ENCODE measurements at regions of chr14 and their contacts with region 1.

Region 1: GRCh38 chr14:64986578-64987571 is at the start of gene FNTB:
- DNase-seq: peak; percentile 92
- ATAC-seq: peak; percentile 99
- H3K4me3 ChIP-seq: peak within 1 kb of the TSS; percentile 63 to 86 (median 83)
- H3K27ac ChIP-seq: peak within 1 kb of the TSS; percentile 88
- H3K4me1 ChIP-seq: peaks cover 55% of the 10 kb centered on the region
- H3K27me3 ChIP-seq: no peaks in the 10 kb centered on the region
- CTCF ChIP-seq: peak; percentile 96
- EP300 ChIP-seq: peak in 1 of 2 experiments; percentile 30; a peak in 1 of 4 replicates
- POLR2A ChIP-seq: peak; percentile 80 to 86
- RAD21 ChIP-seq: peak; percentile 71
- total RNA-seq, gene FNTB: 28.5 and 35.1 TPM in 2 replicates

Region 2: DNA sequence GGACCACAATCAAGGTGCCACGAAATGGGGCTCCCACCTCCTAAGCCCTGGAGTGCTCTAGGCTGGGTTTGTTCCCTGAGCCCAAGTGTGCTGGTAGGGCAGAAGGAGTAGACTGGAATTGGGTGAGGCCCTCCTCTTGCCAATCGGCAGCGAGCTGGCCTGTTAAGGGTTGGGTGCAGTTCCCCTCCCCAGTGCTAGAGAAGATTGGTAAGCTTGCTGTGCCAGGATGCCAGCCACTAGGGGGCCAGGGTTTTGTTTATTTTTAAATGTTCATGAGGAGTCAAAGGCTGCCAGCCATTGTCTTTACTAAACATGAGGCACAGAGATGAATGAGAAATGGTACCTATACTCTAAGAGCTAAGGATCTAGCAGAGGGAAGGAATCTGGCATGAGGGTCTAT is 186.9 kb before region 1 on chr14:
- CTCF ChIA-PET with region 1: no interaction called
- POLR2A ChIA-PET with region 1: no interaction called
- in situ Hi-C with region 1: no loop called
- intact Hi-C with region 1: loop called (anchors 5 kb)
- DNase-seq: peak; percentile 35
- ATAC-seq: peak; percentile 61
- H3K4me3 ChIP-seq: no peak overlapping the region
- H3K27ac ChIP-seq: no peak overlapping the region
- H3K4me1 ChIP-seq: peaks cover 11% of the 10 kb centered on the region; the same call in 1 of the 2 replicates
- H3K27me3 ChIP-seq: peaks cover 2 to 3% of the 10 kb centered on the region in 2 experiments; a peak in 3 of 5 replicates
- CTCF ChIP-seq: peak; percentile 35
- EP300 ChIP-seq: no peak
- POLR2A ChIP-seq: no peak
- RAD21 ChIP-seq: no peak

Region 3: DNA sequence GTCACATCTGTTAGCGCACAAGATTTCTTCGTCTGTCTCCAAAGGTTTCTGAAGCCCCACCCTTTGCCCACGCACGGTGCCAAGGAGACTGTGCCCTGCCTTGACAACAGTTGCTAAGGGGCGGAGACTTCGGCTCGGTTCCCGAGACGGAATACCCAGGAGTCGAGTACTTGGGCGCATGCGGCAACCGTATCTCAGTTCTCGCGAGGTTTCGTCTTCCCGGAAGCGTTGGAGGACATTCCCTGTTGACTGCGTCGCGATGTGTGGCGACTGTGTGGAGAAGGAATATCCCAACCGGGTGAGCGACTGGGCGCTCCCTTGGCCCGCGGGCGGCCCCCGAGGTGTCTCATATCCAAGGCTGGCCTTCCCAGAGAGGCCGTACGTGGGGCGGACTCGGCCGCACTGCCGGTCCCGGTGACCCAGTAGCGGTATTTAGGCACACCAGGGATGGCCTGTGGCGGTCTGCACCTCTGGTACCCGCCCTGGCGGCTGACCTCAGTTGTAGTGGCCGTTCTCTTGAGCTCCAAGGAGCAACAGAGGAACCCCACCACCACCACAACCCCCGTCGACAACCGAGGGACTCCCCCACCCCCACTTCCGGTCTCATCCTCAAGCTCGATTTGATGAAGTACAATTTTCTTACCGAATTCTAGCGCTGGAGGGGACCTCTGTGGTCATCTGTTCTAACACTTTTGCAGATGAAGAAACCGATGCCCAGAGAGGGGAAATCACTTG is 72.5 kb before region 1 on chr14 and contains the start of gene CHURC1:
- CTCF ChIA-PET with region 1: no interaction called
- POLR2A ChIA-PET with region 1: interaction called, 7 read pairs
- in situ Hi-C with region 1: no loop called
- intact Hi-C with region 1: loop called (anchors 2 kb)
- DNase-seq: peak; percentile 95
- ATAC-seq: peak; percentile 98
- H3K4me3 ChIP-seq: peak within 1 kb of the TSS; percentile 86 to 97 (median 90)
- H3K27ac ChIP-seq: peak within 1 kb of the TSS; percentile 78
- H3K4me1 ChIP-seq: peaks cover 34% of the 10 kb centered on the region
- H3K27me3 ChIP-seq: no peaks in the 10 kb centered on the region; a peak in 1 of 5 replicates
- CTCF ChIP-seq: 0 out of 2 replicates have a peak, but pooled peaks have one; percentile 4
- EP300 ChIP-seq: no peak
- POLR2A ChIP-seq: peak; percentile 93 to 95
- RAD21 ChIP-seq: peak; percentile 36; the same call in 1 of the 2 replicates
- total RNA-seq, gene CHURC1: 72.1 and 74.4 TPM in 2 replicates

Region 4: GRCh38 chr14:64947710-64948611 is 38.9 kb before region 1 on chr14:
- CTCF ChIA-PET with region 1: no interaction called
- POLR2A ChIA-PET with region 1: interaction called, 54 read pairs
- in situ Hi-C with region 1: no loop called
- intact Hi-C with region 1: no loop called
- DNase-seq: peak; percentile 85
- ATAC-seq: peak; percentile 97
- H3K4me3 ChIP-seq: peak overlapping the region in 1 of 3 experiments; percentile 54; a peak in 2 of 6 replicates
- H3K27ac ChIP-seq: peak overlapping the region; percentile 79
- H3K4me1 ChIP-seq: peaks cover 64% of the 10 kb centered on the region
- H3K27me3 ChIP-seq: no peaks in the 10 kb centered on the region
- CTCF ChIP-seq: no peak
- EP300 ChIP-seq: peak in 1 of 2 experiments; percentile 35; a peak in 1 of 4 replicates
- POLR2A ChIP-seq: peak; percentile 60 to 74
- RAD21 ChIP-seq: 0 out of 2 replicates have a peak, but pooled peaks have one; percentile 26

Region 5: GRCh38 chr14:64998455-64998931 is 11.6 kb after region 1 on chr14:
- CTCF ChIA-PET with region 1: no interaction called
- POLR2A ChIA-PET with region 1: interaction called, 12 read pairs
- in situ Hi-C with region 1: no loop called
- intact Hi-C with region 1: no loop called
- DNase-seq: no peak
- ATAC-seq: no peak
- H3K4me3 ChIP-seq: no peak overlapping the region
- H3K27ac ChIP-seq: no peak overlapping the region
- H3K4me1 ChIP-seq: peaks cover 30% of the 10 kb centered on the region
- H3K27me3 ChIP-seq: no peaks in the 10 kb centered on the region
- CTCF ChIP-seq: no peak
- EP300 ChIP-seq: no peak
- POLR2A ChIP-seq: no peak
- RAD21 ChIP-seq: no peak

Region 6: GRCh38 chr14:65102441-65103149 is 115.7 kb after region 1 on chr14 and contains the start of gene MAX:
- CTCF ChIA-PET with region 1: no interaction called
- POLR2A ChIA-PET with region 1: interaction called, 4 read pairs
- in situ Hi-C with region 1: no loop called
- intact Hi-C with region 1: loop called (anchors 5 kb)
- DNase-seq: peak; percentile 97
- ATAC-seq: peak; percentile 96
- H3K4me3 ChIP-seq: peak within 1 kb of the TSS; percentile 86 to 96 (median 95)
- H3K27ac ChIP-seq: peak within 1 kb of the TSS; percentile 76
- H3K4me1 ChIP-seq: peaks cover 28% of the 10 kb centered on the region
- H3K27me3 ChIP-seq: no peaks in the 10 kb centered on the region
- CTCF ChIP-seq: no peak
- EP300 ChIP-seq: 0 out of 4 replicates have a peak, but pooled peaks of 1 of the 2 experiments have one; percentile 7
- POLR2A ChIP-seq: peak; percentile 67 to 81
- RAD21 ChIP-seq: 0 out of 2 replicates have a peak, but pooled peaks have one; percentile 8
- total RNA-seq, gene MAX: 28.5 and 29.4 TPM in 2 replicates